Activated CD4-positive, alpha-beta memory T cell treated with anti-CD3 and anti-CD28 coated beads for 36 hours (primary cell): ENCODE measurements at regions of chr3 and their contacts with region 1.

Region 1: GRCh38 chr3:129947538-129948240 is 26.8 kb upstream of the TRH start:
- DNase-seq: no peak
- H3K4me3 Mint-ChIP-seq: no peak overlapping the region
- H3K27ac Mint-ChIP-seq: no peak overlapping the region
- H3K4me1 Mint-ChIP-seq: no peaks in the 10 kb centered on the region
- H3K27me3 Mint-ChIP-seq: peaks cover 5% of the 10 kb centered on the region

Region 2: GRCh38 chr3:129985113-129985512 is 37.4 kb after region 1 on chr3:
- CTCF ChIA-PET with region 1: no interaction called
- POLR2A ChIA-PET with region 1: no interaction called
- intact Hi-C with region 1: loop called (anchors 5 kb)
- DNase-seq: no peak
- H3K4me3 Mint-ChIP-seq: no peak overlapping the region
- H3K27ac Mint-ChIP-seq: no peak overlapping the region
- H3K4me1 Mint-ChIP-seq: no peaks in the 10 kb centered on the region
- H3K27me3 Mint-ChIP-seq: no peaks in the 10 kb centered on the region

Region 3: GRCh38 chr3:130081351-130081881 is 133.7 kb after region 1 on chr3 and contains the start of gene ALG1L2:
- CTCF ChIA-PET with region 1: no interaction called
- POLR2A ChIA-PET with region 1: no interaction called
- intact Hi-C with region 1: no loop called
- DNase-seq: no peak
- H3K4me3 Mint-ChIP-seq: no peak within 1 kb of the TSS
- H3K27ac Mint-ChIP-seq: no peak within 1 kb of the TSS
- H3K4me1 Mint-ChIP-seq: no peaks in the 10 kb centered on the region
- H3K27me3 Mint-ChIP-seq: peaks cover 2% of the 10 kb centered on the region
- total RNA-seq, gene ALG1L2: not detected